ENCODE measurements at regions of chr11 and their contacts with region 1.

Region 1: DNA sequence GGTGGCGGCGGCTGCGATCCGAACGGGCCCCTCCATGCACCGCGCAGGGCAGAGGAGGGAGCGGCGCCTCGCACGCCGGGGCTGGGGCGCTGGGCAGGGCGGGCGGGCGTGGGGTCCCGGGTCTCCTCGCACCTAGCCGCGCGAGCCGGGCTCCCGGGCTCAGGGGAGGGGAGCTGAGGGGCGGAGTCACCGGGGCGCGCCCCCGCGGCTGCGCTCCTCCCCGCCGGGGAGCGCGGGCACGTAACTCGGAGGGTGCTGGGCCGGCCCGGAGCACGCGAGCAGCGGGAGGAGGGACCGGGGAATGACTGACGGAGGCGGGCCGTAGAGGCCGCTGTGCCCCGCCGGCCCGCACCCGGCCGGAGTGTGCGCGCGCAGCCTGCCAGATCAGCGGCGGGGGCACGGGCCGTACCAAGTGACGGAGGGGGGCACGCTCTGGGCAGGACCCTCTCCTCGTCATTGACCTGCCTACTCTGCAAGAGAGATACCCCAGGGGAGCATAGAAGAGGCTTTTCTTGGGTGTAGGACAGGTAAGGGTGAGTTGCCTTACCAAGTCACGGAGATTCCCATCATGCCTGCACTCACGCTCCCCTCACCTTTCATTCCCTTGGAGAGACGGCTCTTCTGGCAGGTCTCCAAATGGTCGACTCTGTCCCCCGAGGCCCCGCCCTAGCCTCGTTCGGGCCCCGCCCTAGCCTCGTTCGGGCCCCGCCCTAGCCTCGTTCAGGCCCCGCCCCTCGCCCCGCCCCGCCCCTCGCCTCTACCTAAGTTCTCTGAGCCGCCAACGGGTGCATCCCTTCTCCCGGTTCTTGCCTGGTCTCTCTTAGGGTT is at the start of gene CDON:
- DNase-seq: peak; percentile 92
- H3K4me3 Mint-ChIP-seq: peak within 1 kb of the TSS; percentile 73
- H3K27ac Mint-ChIP-seq: peak within 1 kb of the TSS; percentile 89
- H3K4me1 Mint-ChIP-seq: peaks cover 5% of the 10 kb centered on the region
- H3K27me3 Mint-ChIP-seq: peaks cover 13% of the 10 kb centered on the region
- total RNA-seq, gene CDON: 2.5 to 2.7 TPM

Region 2: DNA sequence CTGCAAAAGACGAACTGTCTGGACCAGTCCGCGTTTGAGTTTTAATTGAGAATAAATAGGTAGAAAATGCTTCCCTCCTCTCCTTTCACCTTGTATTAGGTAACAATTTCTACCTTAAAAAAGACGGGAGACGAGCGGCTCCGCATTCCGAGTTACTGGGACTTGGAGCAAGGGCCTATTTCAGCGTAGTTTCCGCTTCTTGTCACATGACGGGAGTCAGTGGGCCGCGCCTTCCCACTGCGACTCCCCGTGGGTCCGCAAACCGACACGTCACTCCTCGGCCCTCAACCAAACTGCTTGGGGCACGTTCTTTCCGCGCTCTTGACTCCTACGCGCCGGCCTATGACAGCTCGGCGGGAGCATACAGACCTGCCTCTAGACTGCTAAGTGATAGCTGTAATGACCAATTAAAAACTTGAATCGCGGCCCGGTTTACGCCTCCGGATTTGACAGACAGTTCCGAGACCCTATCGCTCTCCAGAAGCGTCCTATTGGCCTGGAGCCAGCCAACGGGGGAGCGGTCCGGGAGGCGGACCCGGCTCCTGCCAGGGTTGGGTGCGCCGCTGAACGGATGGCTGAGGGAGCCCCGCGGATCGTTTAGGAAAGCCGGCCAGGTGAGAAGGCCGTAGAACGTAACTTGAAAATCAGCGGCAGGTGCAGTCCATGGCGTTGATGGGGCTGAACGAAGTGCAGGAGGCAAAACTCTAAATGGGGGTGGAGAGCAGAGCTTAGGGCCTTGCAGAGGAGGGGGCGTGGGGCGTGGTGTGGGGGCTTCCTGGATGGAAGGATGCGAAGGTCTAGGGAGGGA is 470.4 kb before region 1 on chr11 and contains the start of gene STT3A:
- CTCF ChIA-PET with region 1: no interaction called
- POLR2A ChIA-PET with region 1: no interaction called
- intact Hi-C with region 1: loop called (anchors 1 kb)
- DNase-seq: peak; percentile 99
- H3K4me3 Mint-ChIP-seq: peak within 1 kb of the TSS; percentile 94
- H3K27ac Mint-ChIP-seq: peak within 1 kb of the TSS; percentile 95
- H3K4me1 Mint-ChIP-seq: peaks cover 44% of the 10 kb centered on the region
- H3K27me3 Mint-ChIP-seq: no peaks in the 10 kb centered on the region
- total RNA-seq, gene STT3A: 121 to 132 TPM

Region 3: DNA sequence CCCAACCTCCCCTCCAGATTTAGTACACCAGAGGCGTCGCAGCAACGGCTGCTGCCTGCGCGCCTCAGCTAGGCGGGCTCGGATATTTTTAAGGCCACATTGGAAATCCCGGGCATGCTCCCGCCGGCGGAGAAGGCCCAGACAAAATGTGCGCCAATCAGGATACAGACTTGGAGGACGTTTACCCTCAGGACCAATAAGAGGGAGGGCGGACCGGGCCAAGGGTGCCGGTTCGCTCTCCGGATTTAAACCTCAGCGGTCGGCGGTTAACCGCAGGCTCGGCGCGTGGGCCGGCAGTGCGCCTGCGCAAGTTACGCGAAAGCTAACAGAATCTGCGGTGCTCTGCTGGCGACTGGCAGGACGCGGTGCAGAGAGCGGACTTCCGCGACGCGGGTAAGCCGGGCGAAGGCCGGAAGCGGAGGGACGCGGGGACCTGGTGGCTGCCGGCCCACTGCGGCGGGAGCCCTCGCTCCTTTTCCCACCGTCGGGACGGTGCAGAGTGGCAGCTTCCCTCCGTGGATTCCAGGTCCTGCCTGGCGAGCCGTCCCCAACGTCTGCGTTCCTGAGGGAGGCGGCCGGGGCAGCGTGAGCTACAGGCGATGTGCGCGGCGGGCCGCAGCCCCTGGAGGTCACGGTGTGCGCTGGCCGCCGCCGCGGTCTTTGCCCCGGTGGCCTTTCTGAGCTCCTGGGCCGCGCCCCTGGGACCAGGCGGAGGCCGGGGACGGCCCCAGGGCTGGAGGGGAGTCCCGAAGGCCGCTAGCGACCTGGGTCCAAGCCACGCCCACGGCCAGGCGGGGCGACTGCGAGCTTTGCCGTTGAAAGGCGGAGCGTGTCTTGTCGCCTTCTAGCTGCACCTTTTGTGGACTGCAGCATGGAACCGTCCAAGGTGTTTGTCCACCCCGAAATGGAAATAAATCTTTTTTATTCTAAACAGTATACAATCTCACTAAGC is 175.2 kb before region 1 on chr11 and contains the start of gene HYLS1:
- CTCF ChIA-PET with region 1: no interaction called
- POLR2A ChIA-PET with region 1: no interaction called
- intact Hi-C with region 1: loop called (anchors 1 kb)
- DNase-seq: peak; percentile 99
- H3K4me3 Mint-ChIP-seq: peak within 1 kb of the TSS; percentile 74
- H3K27ac Mint-ChIP-seq: peak within 1 kb of the TSS; percentile 93
- H3K4me1 Mint-ChIP-seq: peaks cover 31% of the 10 kb centered on the region
- H3K27me3 Mint-ChIP-seq: peaks cover 6% of the 10 kb centered on the region
- total RNA-seq, gene HYLS1: 8.2 to 8.3 TPM

Region 4: GRCh38 chr11:125941619-125942611 is 121.0 kb before region 1 on chr11:
- CTCF ChIA-PET with region 1: interaction called, 8 read pairs
- POLR2A ChIA-PET with region 1: no interaction called
- intact Hi-C with region 1: loop called (anchors 1 kb)
- DNase-seq: peak; percentile 69
- H3K4me3 Mint-ChIP-seq: no peak overlapping the region
- H3K27ac Mint-ChIP-seq: no peak overlapping the region
- H3K4me1 Mint-ChIP-seq: peaks cover 9% of the 10 kb centered on the region
- H3K27me3 Mint-ChIP-seq: no peaks in the 10 kb centered on the region

Region 5: DNA sequence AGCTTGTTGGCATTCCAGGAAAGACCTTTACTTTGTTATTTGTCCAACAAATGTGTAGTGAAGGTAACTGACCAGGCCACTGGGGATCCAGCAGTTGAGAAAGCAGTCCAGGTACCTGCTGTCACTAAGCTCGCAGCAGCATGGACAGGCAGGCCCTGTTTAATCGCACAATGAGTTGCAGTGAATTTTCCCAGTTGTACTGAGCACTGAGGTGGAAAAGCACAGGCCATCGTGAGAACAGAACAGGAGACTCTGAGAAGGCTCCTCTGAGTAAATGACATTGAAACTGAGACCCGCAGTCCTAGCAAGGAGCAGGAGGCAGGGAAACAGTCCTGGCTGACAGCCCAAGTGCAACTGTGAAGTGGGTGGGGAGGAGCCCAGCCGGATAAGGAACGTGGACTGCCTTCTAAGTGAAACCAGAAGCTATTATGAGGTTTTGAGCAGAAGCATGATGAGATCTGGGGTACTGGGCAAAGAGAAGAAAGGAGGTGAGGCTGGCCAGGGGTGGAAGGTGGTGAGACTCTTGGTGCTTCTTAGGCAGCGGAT is 39.6 kb after region 1 on chr11:
- CTCF ChIA-PET with region 1: no interaction called
- POLR2A ChIA-PET with region 1: no interaction called
- intact Hi-C with region 1: no loop called
- DNase-seq: no peak
- H3K4me3 Mint-ChIP-seq: no peak overlapping the region
- H3K27ac Mint-ChIP-seq: no peak overlapping the region
- H3K4me1 Mint-ChIP-seq: no peaks in the 10 kb centered on the region
- H3K27me3 Mint-ChIP-seq: no peaks in the 10 kb centered on the region

Region 6: DNA sequence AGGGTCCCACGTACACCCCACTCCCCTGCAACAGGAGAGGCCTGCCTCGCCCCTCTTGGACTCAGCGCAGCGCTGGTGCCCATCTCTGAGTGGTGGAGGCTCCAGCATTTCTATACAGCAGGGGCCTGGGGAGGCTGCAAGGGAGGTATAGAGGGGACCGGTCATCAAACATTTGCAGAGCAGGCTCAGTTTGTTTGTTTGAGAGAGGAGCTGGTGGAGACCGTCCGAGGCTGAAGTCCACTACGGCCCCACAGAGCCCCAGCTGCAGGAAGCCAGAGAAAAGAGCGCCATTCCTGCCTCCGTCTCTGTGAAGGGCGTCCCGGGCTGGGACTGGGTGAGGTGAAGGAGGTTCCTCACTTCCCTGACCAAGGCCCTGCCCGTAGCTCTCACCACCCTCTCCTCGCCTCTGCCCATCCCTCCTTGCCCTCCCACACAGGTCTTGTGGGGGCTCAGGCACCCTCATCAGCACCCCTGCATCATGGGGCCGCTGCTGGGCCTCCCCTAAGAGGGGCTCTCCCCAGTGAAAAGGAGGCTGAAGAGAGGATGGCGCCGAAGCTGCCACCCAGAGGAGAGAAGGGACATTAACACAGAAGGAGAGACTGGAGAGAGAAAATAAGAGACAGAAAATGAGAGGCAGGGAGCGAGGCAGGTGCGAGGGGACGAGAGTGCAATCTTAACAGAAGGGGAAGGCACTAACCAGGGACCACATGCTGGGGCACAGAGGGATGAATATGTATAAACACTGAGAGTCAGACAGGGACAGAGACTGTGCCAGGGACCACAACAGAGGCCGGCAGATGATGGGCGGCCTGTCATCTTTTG is 124.0 kb after region 1 on chr11:
- CTCF ChIA-PET with region 1: no interaction called
- POLR2A ChIA-PET with region 1: no interaction called
- intact Hi-C with region 1: no loop called
- DNase-seq: no peak
- H3K4me3 Mint-ChIP-seq: no peak overlapping the region
- H3K27ac Mint-ChIP-seq: no peak overlapping the region
- H3K4me1 Mint-ChIP-seq: no peaks in the 10 kb centered on the region
- H3K27me3 Mint-ChIP-seq: no peaks in the 10 kb centered on the region

Region 7: DNA sequence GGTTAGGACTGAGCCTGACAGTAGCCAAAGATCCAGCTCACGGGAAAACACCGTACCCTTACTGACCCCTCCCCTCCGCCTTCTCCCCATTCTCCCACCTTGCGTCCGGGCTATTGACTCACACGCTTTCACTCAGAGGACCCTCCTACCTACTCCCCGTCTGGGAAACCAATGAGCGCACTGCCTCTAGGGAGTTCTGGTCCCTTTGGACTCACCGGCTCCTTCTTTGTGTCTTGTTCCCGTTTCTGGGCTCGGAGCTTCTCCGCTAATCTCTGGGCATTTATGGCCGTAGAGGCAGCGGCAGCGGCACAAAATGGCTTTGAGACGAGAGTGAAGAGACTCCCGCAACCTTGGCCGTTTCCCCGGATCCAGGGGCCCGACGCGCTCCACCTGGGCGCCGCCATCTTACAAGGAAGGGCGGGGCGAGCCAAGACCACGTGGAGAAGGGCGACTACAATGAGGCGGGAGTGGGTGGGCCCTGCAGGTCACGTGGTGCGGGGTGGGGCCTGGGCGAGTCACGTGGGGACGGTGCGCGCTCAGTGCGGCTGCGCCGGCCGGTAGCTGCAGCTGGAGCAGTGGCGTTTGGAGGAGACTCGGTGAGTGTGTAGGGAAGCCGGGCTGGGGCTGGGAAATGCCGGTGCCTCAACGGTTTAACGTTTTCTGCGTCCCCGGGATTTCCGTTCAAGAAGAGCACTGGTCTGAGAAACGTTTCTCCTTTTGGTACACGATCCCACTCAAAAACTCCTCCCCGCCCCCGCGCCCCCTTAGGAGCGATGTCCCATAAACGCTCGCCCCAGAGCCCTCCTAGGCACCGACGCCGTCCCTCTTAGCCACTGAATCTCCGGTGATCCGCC is 148.6 kb after region 1 on chr11 and contains the starts of genes FAM118B and RPUSD4:
- CTCF ChIA-PET with region 1: no interaction called
- POLR2A ChIA-PET with region 1: no interaction called
- intact Hi-C with region 1: loop called (anchors 1 kb)
- DNase-seq: peak; percentile 99
- H3K4me3 Mint-ChIP-seq: peak within 1 kb of the TSS; percentile 98
- H3K27ac Mint-ChIP-seq: peak within 1 kb of the TSS; percentile 89
- H3K4me1 Mint-ChIP-seq: peaks cover 41% of the 10 kb centered on the region
- H3K27me3 Mint-ChIP-seq: no peaks in the 10 kb centered on the region
- total RNA-seq, gene FAM118B: 8.0 to 9.7 TPM
- total RNA-seq, gene RPUSD4: 32.4 to 34.1 TPM

Region 8: DNA sequence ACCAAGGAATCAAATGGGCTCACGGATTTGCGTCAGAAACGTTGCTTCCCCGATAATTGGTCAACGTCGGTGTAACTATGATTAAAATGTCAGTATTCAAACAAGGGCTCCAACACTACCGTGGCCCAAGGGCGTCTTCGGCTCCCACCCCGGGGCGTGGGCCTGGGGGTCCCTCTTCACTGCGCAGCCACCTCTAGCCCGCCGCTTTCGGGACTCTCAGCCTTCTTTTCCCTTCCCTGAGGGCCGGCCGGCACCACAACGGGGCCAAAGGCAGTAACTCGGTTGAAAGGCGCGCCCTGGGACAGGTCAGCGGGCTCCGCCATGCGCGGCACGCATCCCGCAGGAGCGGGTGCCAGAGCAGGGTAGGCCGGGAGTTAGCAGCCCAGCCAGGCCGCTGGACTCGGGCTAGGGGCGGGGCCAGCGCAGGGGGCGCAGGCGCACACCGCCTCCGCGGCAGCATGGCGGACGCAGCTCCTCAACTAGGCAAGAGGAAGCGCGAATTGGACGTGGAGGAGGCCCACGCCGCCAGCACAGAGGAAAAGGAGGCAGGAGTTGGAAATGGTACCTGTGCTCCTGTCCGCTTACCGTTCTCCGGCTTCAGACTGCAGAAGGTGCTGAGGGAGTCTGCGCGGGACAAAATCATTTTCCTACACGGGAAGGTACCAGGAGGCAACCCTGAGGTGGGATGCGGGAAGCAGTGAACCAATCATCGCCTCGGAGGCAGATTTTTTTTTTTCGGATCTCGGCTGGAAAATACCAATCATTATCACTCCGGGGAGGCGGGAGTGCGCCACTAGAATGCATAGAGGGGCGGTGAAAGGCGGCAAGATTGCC is 240.9 kb after region 1 on chr11 and contains the start of gene DCPS:
- CTCF ChIA-PET with region 1: no interaction called
- POLR2A ChIA-PET with region 1: no interaction called
- intact Hi-C with region 1: loop called (anchors 1 kb)
- DNase-seq: peak; percentile 92
- H3K4me3 Mint-ChIP-seq: peak within 1 kb of the TSS; percentile 95
- H3K27ac Mint-ChIP-seq: peak within 1 kb of the TSS; percentile 96
- H3K4me1 Mint-ChIP-seq: peaks cover 34% of the 10 kb centered on the region
- H3K27me3 Mint-ChIP-seq: no peaks in the 10 kb centered on the region
- total RNA-seq, gene DCPS: 40.1 to 43.9 TPM

Measured in activated CD4-positive, alpha-beta memory T cell treated with anti-CD3 and anti-CD28 coated beads for 36 hours (primary cell).